K562 (cell line): ENCODE measurements at regions of chrX and their contacts with region 1.

Region 1: GRCh38 chrX:131894987-131895386 is 128.1 kb upstream of the STK26 start:
- DNase-seq: peak in 2 of 4 experiments; percentile 15 to 58
- ATAC-seq: peak; percentile 71
- H3K4me3 ChIP-seq: no peak overlapping the region
- H3K27ac ChIP-seq: peak overlapping the region; percentile 59; the same call in 1 of the 3 replicates
- H3K4me1 ChIP-seq: peaks cover 0 to 9% of the 10 kb centered on the region in 2 experiments; a peak in 4 of 5 replicates
- H3K27me3 ChIP-seq: no peaks in the 10 kb centered on the region
- CTCF ChIP-seq: no peak
- EP300 ChIP-seq: peak; percentile 80
- POLR2A ChIP-seq: no peak
- RAD21 ChIP-seq: no peak

Region 2: DNA sequence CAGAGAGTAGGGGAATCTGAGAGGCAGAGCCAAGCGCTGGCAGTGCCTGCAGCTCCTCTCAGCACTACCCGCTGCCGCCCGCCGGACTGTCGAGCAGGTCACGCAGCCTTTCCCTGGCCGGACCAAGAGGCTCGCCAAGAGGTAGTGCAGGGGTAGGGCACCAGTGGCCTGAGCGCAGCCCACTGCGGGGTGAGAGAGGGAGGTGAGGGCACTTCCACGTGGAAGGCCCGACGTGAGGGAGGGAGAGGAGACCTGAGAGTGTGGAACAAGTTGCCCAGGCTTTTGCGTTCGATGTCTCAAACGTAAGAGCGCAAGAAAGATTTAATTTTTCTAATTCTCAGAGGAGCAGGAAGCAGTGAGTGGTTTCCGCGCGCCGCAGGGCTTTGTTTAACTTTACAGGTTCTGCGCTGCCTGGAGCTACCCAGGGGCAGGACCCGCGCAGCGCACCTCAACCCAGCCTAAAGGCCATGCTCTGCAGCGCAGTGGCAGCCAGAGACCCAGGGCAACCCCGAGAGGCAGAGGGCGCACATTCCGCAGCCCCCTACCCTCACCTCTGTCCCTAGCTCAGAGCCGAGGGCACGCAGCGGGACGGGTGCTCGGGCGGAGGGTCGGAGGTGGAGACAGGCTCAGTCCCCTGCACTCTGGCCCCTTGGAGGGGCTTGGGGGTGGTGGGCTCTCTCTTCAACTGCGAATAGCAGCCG is 822.0 kb before region 1 on chrX:
- CTCF ChIA-PET with region 1: no interaction called
- POLR2A ChIA-PET with region 1: no interaction called
- in situ Hi-C with region 1: no loop called
- intact Hi-C with region 1: no loop called
- DNase-seq: no peak
- ATAC-seq: no peak
- H3K4me3 ChIP-seq: no peak overlapping the region
- H3K27ac ChIP-seq: no peak overlapping the region
- H3K4me1 ChIP-seq: no peaks in the 10 kb centered on the region; a peak in 1 of 5 replicates
- H3K27me3 ChIP-seq: peaks cover 0 to 25% of the 10 kb centered on the region in 2 experiments; a peak in 3 of 5 replicates
- CTCF ChIP-seq: no peak
- EP300 ChIP-seq: no peak
- POLR2A ChIP-seq: no peak
- RAD21 ChIP-seq: no peak

Region 3: DNA sequence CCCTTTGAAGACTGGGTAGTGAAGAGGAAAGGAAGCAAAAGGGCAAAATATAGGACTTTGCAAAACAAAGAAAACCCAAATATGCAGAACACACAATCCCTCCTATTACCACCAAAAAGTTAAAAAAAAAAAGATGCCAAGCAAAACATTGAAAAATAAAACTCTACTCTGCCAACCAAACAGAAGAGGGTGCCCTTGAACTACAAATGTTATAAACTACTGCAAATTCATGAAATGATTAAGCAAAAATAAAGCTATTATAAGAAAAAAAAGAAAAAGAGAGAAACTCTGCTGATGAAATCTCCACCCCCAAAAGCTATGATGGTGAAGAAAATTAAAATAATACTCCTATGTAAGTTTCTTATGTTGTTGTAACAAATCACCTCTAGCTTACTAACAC is 40.4 kb before region 1 on chrX:
- CTCF ChIA-PET with region 1: no interaction called
- POLR2A ChIA-PET with region 1: no interaction called
- in situ Hi-C with region 1: no loop called
- intact Hi-C with region 1: no loop called
- DNase-seq: peak in 1 of 4 experiments; percentile 16
- ATAC-seq: no peak
- H3K4me3 ChIP-seq: no peak overlapping the region
- H3K27ac ChIP-seq: no peak overlapping the region
- H3K4me1 ChIP-seq: no peaks in the 10 kb centered on the region; a peak in 1 of 5 replicates
- H3K27me3 ChIP-seq: no peaks in the 10 kb centered on the region
- CTCF ChIP-seq: peak in 2 of 3 experiments; percentile 15 to 55; a peak in 3 of 6 replicates
- EP300 ChIP-seq: no peak
- POLR2A ChIP-seq: no peak
- RAD21 ChIP-seq: peak; percentile 18 to 47; a peak in 3 of 4 replicates

Region 4: GRCh38 chrX:131907488-131908373 is 12.7 kb after region 1 on chrX:
- CTCF ChIA-PET with region 1: no interaction called
- POLR2A ChIA-PET with region 1: no interaction called
- in situ Hi-C with region 1: no loop called
- intact Hi-C with region 1: no loop called
- DNase-seq: peak; percentile 10 to 22 (median 18)
- ATAC-seq: peak; percentile 75
- H3K4me3 ChIP-seq: no peak overlapping the region
- H3K27ac ChIP-seq: no peak overlapping the region
- H3K4me1 ChIP-seq: peaks cover 0 to 8% of the 10 kb centered on the region in 2 experiments; a peak in 4 of 5 replicates
- H3K27me3 ChIP-seq: no peaks in the 10 kb centered on the region; a peak in 1 of 5 replicates
- CTCF ChIP-seq: no peak
- EP300 ChIP-seq: no peak
- POLR2A ChIP-seq: no peak
- RAD21 ChIP-seq: no peak

Region 5: DNA sequence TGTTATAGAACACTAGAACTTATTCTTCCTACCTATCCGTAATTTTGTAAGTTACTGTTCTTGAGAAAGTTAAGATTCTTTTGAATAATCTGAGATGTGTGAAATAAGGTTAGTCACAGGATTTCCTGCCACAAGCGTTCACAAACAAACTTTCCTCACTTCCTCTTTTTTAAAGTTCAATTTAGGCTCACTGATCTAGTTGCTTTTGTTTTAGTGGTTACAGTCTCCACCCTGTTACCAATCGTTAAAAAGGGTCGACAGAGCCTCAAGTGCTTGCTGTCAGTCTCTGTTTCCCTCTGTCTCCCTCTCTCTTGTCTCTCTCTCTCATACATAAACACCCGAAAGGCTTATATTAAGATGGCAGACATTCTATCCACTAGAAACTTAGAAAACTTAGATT is 92.3 kb after region 1 on chrX:
- CTCF ChIA-PET with region 1: no interaction called
- POLR2A ChIA-PET with region 1: no interaction called
- in situ Hi-C with region 1: no loop called
- intact Hi-C with region 1: loop called (anchors 5 kb)
- DNase-seq: peak in 1 of 4 experiments; percentile 36
- ATAC-seq: peak; percentile 38
- H3K4me3 ChIP-seq: no peak overlapping the region
- H3K27ac ChIP-seq: peak overlapping the region; percentile 82
- H3K4me1 ChIP-seq: peaks cover 7 to 34% of the 10 kb centered on the region in 2 experiments; a peak in 4 of 5 replicates
- H3K27me3 ChIP-seq: no peaks in the 10 kb centered on the region
- CTCF ChIP-seq: no peak
- EP300 ChIP-seq: no peak
- POLR2A ChIP-seq: no peak
- RAD21 ChIP-seq: no peak

Region 6: GRCh38 chrX:132071260-132071659 is 176.3 kb after region 1 on chrX:
- CTCF ChIA-PET with region 1: no interaction called
- POLR2A ChIA-PET with region 1: no interaction called
- in situ Hi-C with region 1: no loop called
- intact Hi-C with region 1: loop called (anchors 2 kb)
- DNase-seq: peak in 3 of 4 experiments; percentile 7 to 14 (median 10)
- ATAC-seq: peak; percentile 64
- H3K4me3 ChIP-seq: no peak overlapping the region
- H3K27ac ChIP-seq: no peak overlapping the region
- H3K4me1 ChIP-seq: no peaks in the 10 kb centered on the region
- H3K27me3 ChIP-seq: no peaks in the 10 kb centered on the region
- CTCF ChIP-seq: peak in 2 of 3 experiments; percentile 22 to 52; a peak in 3 of 6 replicates
- EP300 ChIP-seq: no peak
- POLR2A ChIP-seq: no peak
- RAD21 ChIP-seq: peak; percentile 35 to 61